A549 (cell line): ENCODE measurements at regions of chr2 and their contacts with region 1.

Region 1: GRCh38 chr2:153871231-153872221 is at the start of gene GALNT13:
- DNase-seq: peak; percentile 47 to 97
- ATAC-seq: peak; percentile 92 to 95
- H3K4me3 ChIP-seq: peak within 1 kb of the TSS; percentile 86
- H3K27ac ChIP-seq: peak within 1 kb of the TSS; percentile 87 to 94
- H3K4me1 ChIP-seq: peaks cover 10% of the 10 kb centered on the region; the same call in 2 of the 3 replicates
- CTCF ChIP-seq: peak; percentile 27
- EP300 ChIP-seq: no peak
- POLR2A ChIP-seq: peak; percentile 70
- RAD21 ChIP-seq: peak; percentile 33 to 40; a peak in 4 of 5 replicates
- polyA plus RNA-seq, gene GALNT13: 14.3 and 15.6 TPM in 2 replicates

Region 2: DNA sequence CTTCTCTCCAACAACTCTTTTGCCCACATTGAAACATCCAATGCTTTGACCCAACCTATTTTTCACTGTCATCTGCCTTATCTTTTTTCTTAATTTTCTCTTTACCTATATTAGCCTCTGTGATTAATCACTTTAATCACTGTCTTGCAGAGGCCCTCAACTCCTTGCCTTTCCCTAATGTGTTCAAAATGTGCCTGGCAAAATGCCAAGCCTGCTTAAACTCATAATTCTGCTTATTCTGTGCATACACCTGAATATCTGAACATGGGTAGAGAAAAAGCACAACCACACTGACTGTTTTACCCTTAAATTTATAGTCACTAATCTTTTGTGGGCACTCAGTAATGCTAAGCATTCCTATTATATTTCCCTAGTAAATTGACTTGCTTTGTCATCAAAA is 62.8 kb before region 1 on chr2:
- CTCF ChIA-PET with region 1: no interaction called
- POLR2A ChIA-PET with region 1: no interaction called
- DNase-seq: no peak
- ATAC-seq: no peak
- H3K4me3 ChIP-seq: no peak overlapping the region
- H3K27ac ChIP-seq: no peak overlapping the region
- H3K4me1 ChIP-seq: no peaks in the 10 kb centered on the region
- CTCF ChIP-seq: no peak
- EP300 ChIP-seq: no peak
- POLR2A ChIP-seq: no peak
- RAD21 ChIP-seq: no peak

Region 3: DNA sequence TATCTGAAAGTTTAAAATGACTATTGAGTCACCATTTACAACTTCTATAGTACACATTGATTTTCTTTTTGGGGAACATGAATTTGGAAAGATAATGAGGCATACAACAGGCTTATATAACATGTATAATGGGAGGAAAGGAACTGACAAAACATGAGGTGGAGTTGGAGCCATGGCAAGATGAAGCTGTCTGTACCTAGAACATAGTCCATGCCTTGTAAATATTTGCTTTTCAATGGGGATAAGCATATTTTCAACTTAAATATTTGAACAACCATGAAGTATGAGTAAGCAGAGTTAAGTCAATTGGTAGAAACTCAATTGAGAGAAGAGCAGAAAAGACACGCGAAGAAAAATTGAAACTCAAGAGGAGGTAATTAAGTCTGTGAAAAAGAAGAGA is 36.9 kb before region 1 on chr2:
- CTCF ChIA-PET with region 1: no interaction called
- POLR2A ChIA-PET with region 1: no interaction called
- DNase-seq: peak in 1 of 2 experiments; percentile 4
- ATAC-seq: peak in 1 of 2 experiments; percentile 49; a peak in 2 of 6 replicates
- H3K4me3 ChIP-seq: no peak overlapping the region
- H3K27ac ChIP-seq: no peak overlapping the region
- H3K4me1 ChIP-seq: no peaks in the 10 kb centered on the region
- CTCF ChIP-seq: no peak
- EP300 ChIP-seq: no peak
- POLR2A ChIP-seq: no peak
- RAD21 ChIP-seq: no peak

Region 4: GRCh38 chr2:154015235-154015634 is 143.7 kb after region 1 on chr2:
- CTCF ChIA-PET with region 1: no interaction called
- POLR2A ChIA-PET with region 1: no interaction called
- DNase-seq: no peak
- ATAC-seq: no peak
- H3K4me3 ChIP-seq: no peak overlapping the region
- H3K27ac ChIP-seq: no peak overlapping the region
- H3K4me1 ChIP-seq: no peaks in the 10 kb centered on the region
- CTCF ChIP-seq: no peak
- EP300 ChIP-seq: no peak
- POLR2A ChIP-seq: no peak
- RAD21 ChIP-seq: no peak

Region 5: DNA sequence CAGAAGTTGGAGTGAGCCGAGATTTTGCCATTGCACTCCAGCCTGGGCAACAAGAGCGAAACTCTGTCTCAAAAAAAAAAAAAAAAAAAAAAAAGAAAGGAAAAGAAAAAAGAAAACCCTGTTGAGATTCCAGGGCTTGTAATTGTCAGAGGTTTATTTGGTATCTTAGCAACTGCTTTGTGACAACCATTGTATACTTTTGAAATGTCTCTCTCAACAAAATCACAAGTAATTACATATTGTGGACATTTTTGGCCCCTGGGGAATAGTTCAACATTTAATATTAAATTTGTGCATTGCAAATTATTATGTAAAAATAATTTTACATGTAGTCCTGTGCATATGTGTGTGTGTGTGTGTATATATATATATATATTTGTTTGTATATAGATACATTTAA is 271.0 kb after region 1 on chr2:
- CTCF ChIA-PET with region 1: interaction called, 4 read pairs
- POLR2A ChIA-PET with region 1: interaction called, 17 read pairs
- DNase-seq: peak in 1 of 2 experiments; percentile 21
- ATAC-seq: no peak
- H3K4me3 ChIP-seq: no peak overlapping the region
- H3K27ac ChIP-seq: peak overlapping the region; percentile 84 to 93; a peak in 5 of 6 replicates
- H3K4me1 ChIP-seq: peaks cover 55% of the 10 kb centered on the region
- CTCF ChIP-seq: no peak
- EP300 ChIP-seq: no peak
- POLR2A ChIP-seq: no peak
- RAD21 ChIP-seq: no peak

Region 6: GRCh38 chr2:154375579-154375931 is 504.0 kb after region 1 on chr2:
- CTCF ChIA-PET with region 1: interaction called, 36 read pairs
- POLR2A ChIA-PET with region 1: interaction called, 5 read pairs
- DNase-seq: peak; percentile 9 to 69
- ATAC-seq: peak; percentile 80 to 91
- H3K4me3 ChIP-seq: peak overlapping the region; percentile 26; the same call in 1 of the 3 replicates
- H3K27ac ChIP-seq: 0 out of 6 replicates have a peak overlapping the region, but pooled peaks of 1 of the 2 experiments have one; percentile 49
- H3K4me1 ChIP-seq: no peaks in the 10 kb centered on the region
- CTCF ChIP-seq: peak; percentile 79
- EP300 ChIP-seq: no peak
- POLR2A ChIP-seq: no peak
- RAD21 ChIP-seq: peak; percentile 77 to 91